T-cell (primary cell): ENCODE measurements at regions of chr5 and their contacts with region 1.

Region 1: DNA sequence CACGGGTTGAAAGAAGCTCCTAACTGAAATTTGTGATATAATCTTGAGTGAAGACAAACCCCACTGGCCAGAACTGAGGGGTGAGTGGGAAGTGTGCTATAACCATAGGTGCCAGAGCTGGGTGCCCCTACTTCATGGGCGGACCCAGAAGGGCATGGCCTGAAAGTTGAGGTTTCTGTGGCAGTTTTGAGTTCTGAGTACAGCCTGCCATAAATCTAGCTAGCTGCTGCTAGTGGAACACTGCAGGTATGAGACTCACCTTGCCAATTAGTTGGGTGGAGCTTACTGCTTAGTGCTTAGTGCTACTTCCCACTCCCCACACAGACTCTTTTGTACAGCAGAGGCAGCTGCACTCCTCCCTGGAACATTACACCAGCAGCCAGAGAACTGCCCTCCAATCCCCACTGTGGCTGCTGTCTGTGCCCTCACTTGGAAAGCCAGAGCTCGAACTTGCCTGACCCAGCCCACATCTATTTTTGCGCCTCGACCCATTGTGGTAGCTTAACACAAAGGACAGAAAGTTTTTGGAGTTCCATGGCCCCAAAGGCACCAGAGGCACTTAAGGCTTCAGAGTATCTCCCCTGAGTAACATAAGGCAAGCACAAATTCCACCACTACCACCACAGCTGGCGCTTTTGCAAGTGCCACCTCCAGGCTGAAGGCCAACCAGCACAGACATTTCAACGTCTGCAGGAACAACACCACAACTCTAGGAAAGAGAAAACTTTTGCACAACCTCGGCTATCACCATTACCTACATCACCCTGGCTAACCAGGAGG is 27.1 kb upstream of the PTGER4 start:
- DNase-seq: peak in 10 of 35 experiments; percentile 8 to 38 (median 22)
- ATAC-seq: peak; percentile 20 to 39 (median 30)
- H3K4me3 ChIP-seq: no peak overlapping the region
- H3K4me3 Mint-ChIP-seq: peak overlapping the region; percentile 7 to 85 (median 64)
- H3K27ac ChIP-seq: peak overlapping the region; percentile 83
- H3K27ac Mint-ChIP-seq: peak overlapping the region; percentile 96 to 99
- H3K4me1 ChIP-seq: peaks cover 27 to 50% of the 10 kb centered on the region in 2 experiments
- H3K4me1 Mint-ChIP-seq: peaks cover 72 to 81% (median 73%) of the 10 kb centered on the region in 3 donors
- H3K27me3 ChIP-seq: no peaks in the 10 kb centered on the region
- H3K27me3 Mint-ChIP-seq: no peaks in the 10 kb centered on the region

Region 2: DNA sequence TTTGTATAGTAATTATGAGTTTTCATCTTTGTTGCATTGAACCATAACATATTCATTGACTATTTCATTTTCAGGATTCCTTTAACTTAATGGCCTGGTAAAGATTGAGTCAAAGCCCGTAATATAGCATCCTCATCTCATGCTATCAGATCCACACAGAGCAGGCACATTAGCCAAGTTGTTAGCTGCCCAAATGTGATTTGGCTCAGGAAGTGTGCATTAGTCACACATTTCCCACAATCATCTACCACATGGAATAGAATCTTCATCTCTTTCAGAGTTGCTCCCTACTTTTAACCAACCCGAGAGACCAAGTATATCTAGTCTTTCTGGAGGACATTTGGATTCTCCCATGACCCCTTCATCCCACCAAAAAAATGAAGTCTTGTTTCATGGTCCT is 453.9 kb before region 1 on chr5:
- CTCF ChIA-PET with region 1: no interaction called
- POLR2A ChIA-PET with region 1: interaction called in 1 of 2 experiments, 10 read pairs
- DNase-seq: no peak
- ATAC-seq: no peak
- H3K4me3 ChIP-seq: no peak overlapping the region
- H3K4me3 Mint-ChIP-seq: no peak overlapping the region
- H3K27ac ChIP-seq: no peak overlapping the region
- H3K27ac Mint-ChIP-seq: no peak overlapping the region
- H3K4me1 ChIP-seq: no peaks in the 10 kb centered on the region
- H3K4me1 Mint-ChIP-seq: no peaks in the 10 kb centered on the region
- H3K27me3 ChIP-seq: no peaks in the 10 kb centered on the region
- H3K27me3 Mint-ChIP-seq: no peaks in the 10 kb centered on the region

Region 3: DNA sequence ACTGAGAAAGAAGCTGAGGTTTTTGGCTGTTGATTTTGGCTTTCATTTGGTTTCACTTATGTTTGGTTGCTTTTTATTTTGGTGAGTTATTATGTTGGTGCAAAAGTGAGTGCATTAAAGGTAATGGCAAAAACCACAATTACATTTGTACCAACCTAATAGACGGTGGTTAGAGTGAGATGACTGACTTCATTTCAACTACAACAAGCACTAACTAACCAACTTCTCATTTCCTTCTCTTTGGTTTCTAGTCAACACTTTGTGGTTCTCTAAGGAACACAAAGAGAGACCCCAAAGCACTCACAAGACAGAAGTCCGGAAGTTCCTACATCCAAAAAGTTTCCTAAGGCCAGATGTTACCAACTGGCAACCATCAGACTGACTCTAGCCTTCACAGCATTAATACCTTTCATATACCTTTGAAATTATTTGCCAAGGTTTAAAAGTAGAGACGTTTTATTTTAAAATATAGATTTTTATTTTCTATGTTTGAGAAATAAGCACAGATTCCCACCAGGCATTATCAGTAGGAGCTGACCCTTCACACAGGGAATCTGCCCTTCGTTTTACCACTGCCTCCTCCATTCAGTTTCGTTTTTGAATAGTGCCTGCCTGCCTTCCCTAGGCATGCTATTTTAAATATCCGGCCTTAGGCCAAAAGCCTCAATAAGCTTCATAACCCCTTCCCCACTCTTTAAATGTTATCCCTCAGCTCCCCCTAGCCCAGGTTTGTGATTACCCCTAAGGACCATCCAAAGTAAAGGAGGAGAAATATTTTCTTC is 274.0 kb before region 1 on chr5:
- CTCF ChIA-PET with region 1: interaction called in 1 of 2 experiments, 3 read pairs
- POLR2A ChIA-PET with region 1: interaction called in 1 of 2 experiments, 12 read pairs
- DNase-seq: peak in 1 of 35 experiments; percentile 64
- ATAC-seq: peak in 3 of 4 experiments; percentile 27 to 81 (median 54)
- H3K4me3 ChIP-seq: no peak overlapping the region
- H3K4me3 Mint-ChIP-seq: peak overlapping the region; percentile 5 to 41 (median 31)
- H3K27ac ChIP-seq: peak overlapping the region; percentile 39
- H3K27ac Mint-ChIP-seq: peak overlapping the region; percentile 82 to 90
- H3K4me1 ChIP-seq: peaks cover 9 to 11% of the 10 kb centered on the region in 2 experiments
- H3K4me1 Mint-ChIP-seq: peaks cover 28 to 57% (median 47%) of the 10 kb centered on the region in 3 donors
- H3K27me3 ChIP-seq: no peaks in the 10 kb centered on the region
- H3K27me3 Mint-ChIP-seq: no peaks in the 10 kb centered on the region

Region 4: GRCh38 chr5:40518511-40518967 is 134.1 kb before region 1 on chr5:
- CTCF ChIA-PET with region 1: no interaction called
- POLR2A ChIA-PET with region 1: no interaction called
- DNase-seq: no peak
- ATAC-seq: no peak
- H3K4me3 ChIP-seq: no peak overlapping the region
- H3K4me3 Mint-ChIP-seq: no peak overlapping the region
- H3K27ac ChIP-seq: no peak overlapping the region
- H3K27ac Mint-ChIP-seq: peak overlapping the region in 1 of 2 donors; percentile 33
- H3K4me1 ChIP-seq: peaks cover 15 to 22% of the 10 kb centered on the region in 2 experiments
- H3K4me1 Mint-ChIP-seq: peaks cover 34 to 38% (median 36%) of the 10 kb centered on the region in 3 donors
- H3K27me3 ChIP-seq: no peaks in the 10 kb centered on the region
- H3K27me3 Mint-ChIP-seq: no peaks in the 10 kb centered on the region